ENCODE measurements at regions of chr15 and their contacts with region 1.

Region 1: DNA sequence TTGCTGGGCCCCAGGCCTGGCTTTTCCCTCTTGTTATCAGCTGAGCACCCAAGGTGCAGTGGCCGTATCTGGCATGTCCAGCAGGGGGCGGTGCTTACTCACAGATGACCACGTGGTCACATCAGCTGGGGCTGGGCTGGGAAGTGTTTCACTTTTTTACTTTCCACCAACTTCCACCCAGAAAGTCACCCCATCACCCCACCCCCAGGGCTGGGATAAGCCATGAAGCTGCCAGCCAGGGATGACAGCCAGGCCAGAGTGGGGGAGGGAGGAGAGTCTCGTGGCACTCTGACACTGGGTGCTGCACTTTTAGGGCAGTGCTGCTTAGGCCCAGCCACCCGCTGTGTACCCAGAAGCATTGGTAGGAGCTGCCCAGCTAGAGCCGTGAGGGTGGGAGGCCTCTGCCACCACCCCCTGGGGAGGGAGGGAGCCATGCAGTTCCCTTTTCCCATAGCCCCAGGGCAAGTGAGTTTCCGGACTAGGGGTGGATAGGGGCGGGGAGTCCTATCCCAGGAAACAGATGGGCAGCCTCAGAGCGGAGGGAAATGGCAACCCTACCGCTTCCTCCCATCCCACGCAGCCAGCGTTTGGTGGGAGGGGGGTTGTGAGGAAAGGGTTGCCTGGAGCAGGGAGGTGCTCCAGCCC is 6.1 kb downstream of the PPCDC start:
- DNase-seq: peak; percentile 92
- ATAC-seq: peak; percentile 93
- H3K4me3 Mint-ChIP-seq: no peak overlapping the region
- H3K27ac Mint-ChIP-seq: peak overlapping the region; percentile 72
- H3K4me1 Mint-ChIP-seq: peaks cover 34% of the 10 kb centered on the region
- H3K27me3 Mint-ChIP-seq: no peaks in the 10 kb centered on the region

Region 2: GRCh38 chr15:74978503-74978902 is 51.0 kb before region 1 on chr15:
- CTCF ChIA-PET with region 1: no interaction called
- DNase-seq: peak; percentile 58
- ATAC-seq: no peak
- H3K4me3 Mint-ChIP-seq: no peak overlapping the region
- H3K27ac Mint-ChIP-seq: no peak overlapping the region
- H3K4me1 Mint-ChIP-seq: peaks cover 17% of the 10 kb centered on the region
- H3K27me3 Mint-ChIP-seq: peaks cover 12% of the 10 kb centered on the region

Region 3: DNA sequence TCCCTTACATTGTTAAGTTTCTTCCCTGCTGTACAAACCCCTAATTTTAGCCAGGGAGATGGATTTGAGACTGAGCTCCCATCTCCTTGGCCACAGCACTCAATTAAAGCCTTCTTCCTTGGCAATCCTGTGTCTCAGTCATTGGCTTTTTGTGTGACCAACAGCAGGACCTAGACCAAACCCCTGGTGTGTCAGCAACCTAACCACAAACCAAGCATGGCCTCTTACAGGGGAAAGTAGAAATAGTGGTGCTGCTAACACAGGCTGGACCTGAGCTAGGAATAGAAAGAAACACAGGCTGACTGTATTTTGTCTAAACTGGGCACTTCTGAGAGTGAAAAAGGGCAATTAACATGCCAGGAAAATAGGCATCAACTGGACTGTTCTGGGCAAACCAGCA is 31.8 kb after region 1 on chr15:
- CTCF ChIA-PET with region 1: no interaction called
- DNase-seq: peak; percentile 78
- ATAC-seq: peak; percentile 66
- H3K4me3 Mint-ChIP-seq: no peak overlapping the region
- H3K27ac Mint-ChIP-seq: peak overlapping the region; percentile 70
- H3K4me1 Mint-ChIP-seq: peaks cover 49% of the 10 kb centered on the region
- H3K27me3 Mint-ChIP-seq: no peaks in the 10 kb centered on the region

Region 4: GRCh38 chr15:75188489-75188888 is 159.0 kb after region 1 on chr15:
- CTCF ChIA-PET with region 1: no interaction called
- DNase-seq: no peak
- ATAC-seq: no peak
- H3K4me3 Mint-ChIP-seq: no peak overlapping the region
- H3K27ac Mint-ChIP-seq: no peak overlapping the region
- H3K4me1 Mint-ChIP-seq: peaks cover 3% of the 10 kb centered on the region
- H3K27me3 Mint-ChIP-seq: peaks cover 6% of the 10 kb centered on the region

Region 5: DNA sequence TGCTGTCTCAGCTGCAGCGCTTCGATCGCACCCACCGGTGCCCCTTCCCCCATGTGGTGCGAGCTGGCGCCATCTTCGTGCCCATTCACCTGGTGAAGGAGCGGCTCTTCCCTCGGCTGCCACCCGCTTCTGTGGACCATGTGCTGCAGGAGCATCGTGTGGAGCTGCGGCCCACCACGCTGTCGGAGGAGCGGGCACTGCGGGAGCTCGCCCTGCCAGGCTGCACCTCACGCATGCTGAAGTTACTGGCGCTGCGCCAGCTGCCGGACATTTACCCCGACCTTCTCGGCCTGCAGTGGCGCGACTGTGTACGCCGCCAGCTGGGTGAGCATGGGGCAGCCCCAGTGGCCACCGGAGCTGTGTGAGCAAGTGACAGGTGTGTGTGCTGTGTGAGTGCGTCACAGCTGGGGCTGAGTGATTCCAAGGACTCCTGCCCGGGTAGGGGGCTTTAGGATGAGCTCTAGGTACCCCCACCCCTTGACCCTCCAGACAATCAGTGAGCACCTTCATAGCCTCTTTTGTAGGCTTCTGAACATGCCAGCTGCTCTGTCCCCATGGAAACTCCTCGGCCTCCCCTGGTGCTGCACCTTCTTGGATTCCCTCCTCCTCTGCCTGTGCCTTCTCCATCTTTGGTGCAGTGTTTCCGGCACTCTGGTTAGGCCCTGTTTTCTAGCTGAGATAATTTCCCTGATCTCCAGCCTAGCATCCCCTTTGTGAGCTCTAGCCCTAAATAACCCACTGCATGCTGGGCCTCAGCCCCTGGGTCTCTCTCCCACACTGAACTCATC is 179.2 kb after region 1 on chr15:
- CTCF ChIA-PET with region 1: interaction called, 68 read pairs
- DNase-seq: no peak
- ATAC-seq: no peak
- H3K4me3 Mint-ChIP-seq: no peak overlapping the region
- H3K27ac Mint-ChIP-seq: no peak overlapping the region
- H3K4me1 Mint-ChIP-seq: peaks cover 45% of the 10 kb centered on the region
- H3K27me3 Mint-ChIP-seq: no peaks in the 10 kb centered on the region

Measured in activated CD8-positive, alpha-beta memory T cell treated with anti-CD3 and anti-CD28 coated beads, Interleukin-2, amount 10 ng/mL, durations not matched to agents 7 days and 5 days (primary cell).